ENCODE measurements at regions of chr1 and their contacts with region 1.

Region 1: GRCh38 chr1:165914136-165914798 is 86.9 kb downstream of the UCK2 start:
- DNase-seq: peak; percentile 61 to 71 (median 67)
- H3K4me3 ChIP-seq: no peak overlapping the region
- H3K4me3 Mint-ChIP-seq: no peak overlapping the region
- H3K27ac ChIP-seq: no peak overlapping the region
- H3K27ac Mint-ChIP-seq: peak overlapping the region in 1 of 7 donors; percentile 31
- H3K4me1 ChIP-seq: no peaks in the 10 kb centered on the region
- H3K4me1 Mint-ChIP-seq: peaks cover 0 to 4% (median 3%) of the 10 kb centered on the region in 4 donors
- H3K27me3 ChIP-seq: no peaks in the 10 kb centered on the region
- H3K27me3 Mint-ChIP-seq: no peaks in the 10 kb centered on the region

Region 2: GRCh38 chr1:165403835-165404482 is 510.3 kb before region 1 on chr1:
- CTCF ChIA-PET with region 1: no interaction called
- POLR2A ChIA-PET with region 1: no interaction called
- intact Hi-C with region 1: loop called (anchors 1 kb)
- DNase-seq: peak in 3 of 5 donors; percentile 26 to 33 (median 30)
- H3K4me3 ChIP-seq: no peak overlapping the region
- H3K4me3 Mint-ChIP-seq: no peak overlapping the region
- H3K27ac ChIP-seq: no peak overlapping the region
- H3K27ac Mint-ChIP-seq: no peak overlapping the region
- H3K4me1 ChIP-seq: no peaks in the 10 kb centered on the region
- H3K4me1 Mint-ChIP-seq: peaks cover 0 to 5% (median 2%) of the 10 kb centered on the region in 4 donors
- H3K27me3 ChIP-seq: no peaks in the 10 kb centered on the region
- H3K27me3 Mint-ChIP-seq: peaks cover 15 to 17% of the 10 kb centered on the region in 2 donors

Region 3: GRCh38 chr1:165697881-165698760 is 216.1 kb before region 1 on chr1 and contains the start of gene ALDH9A1:
- CTCF ChIA-PET with region 1: interaction called, 15 read pairs
- POLR2A ChIA-PET with region 1: no interaction called
- intact Hi-C with region 1: loop called (anchors 1 kb)
- DNase-seq: peak; percentile 86 to 91 (median 87)
- H3K4me3 ChIP-seq: peak within 1 kb of the TSS; percentile 95 to 97
- H3K4me3 Mint-ChIP-seq: peak within 1 kb of the TSS; percentile 92 to 100 (median 98)
- H3K27ac ChIP-seq: peak within 1 kb of the TSS; percentile 79
- H3K27ac Mint-ChIP-seq: peak within 1 kb of the TSS; percentile 91 to 99 (median 97)
- H3K4me1 ChIP-seq: peaks cover 21% of the 10 kb centered on the region
- H3K4me1 Mint-ChIP-seq: peaks cover 15 to 39% (median 27%) of the 10 kb centered on the region in 4 donors
- H3K27me3 ChIP-seq: no peaks in the 10 kb centered on the region
- H3K27me3 Mint-ChIP-seq: no peaks in the 10 kb centered on the region
- total RNA-seq, gene ALDH9A1: 45.2 to 47.1 TPM

Region 4: DNA sequence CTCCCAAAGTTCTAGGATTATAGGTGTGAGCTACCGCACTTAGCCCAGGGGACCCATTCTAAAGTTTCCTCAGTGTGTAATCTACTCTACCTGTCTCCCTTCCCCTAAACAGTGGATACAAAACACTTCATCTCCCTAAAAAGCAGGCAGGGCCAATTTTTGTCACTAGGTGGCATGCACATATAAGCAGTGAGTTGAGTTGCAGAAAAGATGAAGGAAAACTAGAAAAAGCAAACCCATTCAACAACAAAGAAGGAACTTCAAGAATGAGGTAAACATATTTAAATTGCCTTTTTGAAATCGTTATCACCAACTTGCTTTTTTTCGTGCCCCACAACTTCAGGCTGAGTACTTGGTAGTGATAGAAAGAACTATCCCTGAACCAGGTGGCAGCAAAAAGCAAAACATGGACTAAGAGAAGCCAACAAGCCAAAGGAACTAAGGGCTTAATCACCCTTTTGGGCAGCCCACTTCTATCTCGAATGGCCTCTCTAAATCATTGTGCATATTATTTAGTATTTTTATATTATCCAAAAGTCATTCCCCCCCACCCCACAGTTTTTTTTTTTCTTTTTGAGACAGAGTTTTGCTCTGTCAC is 196.2 kb before region 1 on chr1:
- CTCF ChIA-PET with region 1: interaction called, 4 read pairs
- POLR2A ChIA-PET with region 1: no interaction called
- intact Hi-C with region 1: loop called (anchors 1 kb)
- DNase-seq: peak; percentile 10 to 41 (median 20)
- H3K4me3 ChIP-seq: no peak overlapping the region
- H3K4me3 Mint-ChIP-seq: no peak overlapping the region
- H3K27ac ChIP-seq: no peak overlapping the region
- H3K27ac Mint-ChIP-seq: peak overlapping the region in 1 of 7 donors; percentile 13
- H3K4me1 ChIP-seq: no peaks in the 10 kb centered on the region
- H3K4me1 Mint-ChIP-seq: no peaks in the 10 kb centered on the region
- H3K27me3 ChIP-seq: no peaks in the 10 kb centered on the region
- H3K27me3 Mint-ChIP-seq: no peaks in the 10 kb centered on the region

Region 5: GRCh38 chr1:165768513-165769394 is 145.5 kb before region 1 on chr1 and contains the start of gene TMCO1:
- CTCF ChIA-PET with region 1: interaction called, 7 read pairs
- POLR2A ChIA-PET with region 1: no interaction called
- intact Hi-C with region 1: loop called (anchors 5 kb)
- DNase-seq: peak; percentile 93 to 98 (median 97)
- H3K4me3 ChIP-seq: peak within 1 kb of the TSS; percentile 68 to 69
- H3K4me3 Mint-ChIP-seq: peak within 1 kb of the TSS; percentile 94 to 99 (median 98)
- H3K27ac ChIP-seq: peak within 1 kb of the TSS; percentile 88
- H3K27ac Mint-ChIP-seq: peak within 1 kb of the TSS; percentile 96 to 100 (median 98)
- H3K4me1 ChIP-seq: peaks cover 60% of the 10 kb centered on the region
- H3K4me1 Mint-ChIP-seq: peaks cover 44 to 72% (median 59%) of the 10 kb centered on the region in 4 donors
- H3K27me3 ChIP-seq: no peaks in the 10 kb centered on the region
- H3K27me3 Mint-ChIP-seq: no peaks in the 10 kb centered on the region
- total RNA-seq, gene TMCO1: 63.7 to 67.3 TPM

Region 6: GRCh38 chr1:165903672-165904071 is 10.6 kb before region 1 on chr1:
- CTCF ChIA-PET with region 1: interaction called, 123 read pairs
- POLR2A ChIA-PET with region 1: no interaction called
- intact Hi-C with region 1: no loop called
- DNase-seq: no peak
- H3K4me3 ChIP-seq: no peak overlapping the region
- H3K4me3 Mint-ChIP-seq: no peak overlapping the region
- H3K27ac ChIP-seq: no peak overlapping the region
- H3K27ac Mint-ChIP-seq: no peak overlapping the region
- H3K4me1 ChIP-seq: no peaks in the 10 kb centered on the region
- H3K4me1 Mint-ChIP-seq: peaks cover 0 to 5% (median 0%) of the 10 kb centered on the region in 4 donors
- H3K27me3 ChIP-seq: no peaks in the 10 kb centered on the region
- H3K27me3 Mint-ChIP-seq: no peaks in the 10 kb centered on the region

Region 7: DNA sequence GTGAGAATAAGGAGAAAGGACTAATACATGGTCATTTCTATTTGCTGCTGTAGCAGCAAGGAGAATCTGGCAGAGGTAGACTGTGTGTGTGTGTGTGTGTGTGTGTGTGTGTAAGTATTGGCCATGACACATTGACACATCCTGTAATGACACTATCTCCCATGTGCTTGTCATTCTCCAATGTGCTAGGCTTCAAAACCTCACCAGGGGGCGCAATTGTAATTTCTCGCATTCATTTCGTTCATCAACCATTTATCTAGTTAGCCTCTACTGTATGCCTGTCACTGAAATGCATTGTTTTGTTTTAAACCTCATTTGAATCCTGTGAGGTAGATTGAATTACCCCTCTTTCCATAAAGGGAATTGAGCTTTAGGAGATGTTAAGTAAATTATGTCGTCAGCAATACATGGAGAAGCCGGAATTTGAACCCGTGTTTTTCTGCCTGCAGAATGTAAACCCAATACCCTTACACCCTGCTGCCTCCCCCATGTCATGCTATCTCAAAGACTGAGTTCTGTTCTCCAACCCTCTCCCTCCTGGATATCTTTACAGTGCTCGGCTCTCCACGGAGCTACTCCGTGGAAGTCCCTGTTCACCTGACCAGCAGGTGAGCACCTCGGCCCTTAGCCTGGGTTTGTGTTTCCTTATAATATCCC is 13.9 kb after region 1 on chr1:
- CTCF ChIA-PET with region 1: interaction called, 123 read pairs
- POLR2A ChIA-PET with region 1: no interaction called
- intact Hi-C with region 1: no loop called
- DNase-seq: peak in 4 of 5 donors; percentile 45 to 55 (median 48)
- H3K4me3 ChIP-seq: no peak overlapping the region
- H3K4me3 Mint-ChIP-seq: no peak overlapping the region
- H3K27ac ChIP-seq: no peak overlapping the region
- H3K27ac Mint-ChIP-seq: peak overlapping the region in 1 of 7 donors; percentile 10
- H3K4me1 ChIP-seq: no peaks in the 10 kb centered on the region
- H3K4me1 Mint-ChIP-seq: peaks cover 0 to 2% (median 0%) of the 10 kb centered on the region in 4 donors
- H3K27me3 ChIP-seq: no peaks in the 10 kb centered on the region
- H3K27me3 Mint-ChIP-seq: peaks cover 10 to 17% of the 10 kb centered on the region in 2 donors

Measured in CD4-positive, alpha-beta memory T cell (primary cell).